ENCODE measurements at regions of chr19 and their contacts with region 1.

Region 1: DNA sequence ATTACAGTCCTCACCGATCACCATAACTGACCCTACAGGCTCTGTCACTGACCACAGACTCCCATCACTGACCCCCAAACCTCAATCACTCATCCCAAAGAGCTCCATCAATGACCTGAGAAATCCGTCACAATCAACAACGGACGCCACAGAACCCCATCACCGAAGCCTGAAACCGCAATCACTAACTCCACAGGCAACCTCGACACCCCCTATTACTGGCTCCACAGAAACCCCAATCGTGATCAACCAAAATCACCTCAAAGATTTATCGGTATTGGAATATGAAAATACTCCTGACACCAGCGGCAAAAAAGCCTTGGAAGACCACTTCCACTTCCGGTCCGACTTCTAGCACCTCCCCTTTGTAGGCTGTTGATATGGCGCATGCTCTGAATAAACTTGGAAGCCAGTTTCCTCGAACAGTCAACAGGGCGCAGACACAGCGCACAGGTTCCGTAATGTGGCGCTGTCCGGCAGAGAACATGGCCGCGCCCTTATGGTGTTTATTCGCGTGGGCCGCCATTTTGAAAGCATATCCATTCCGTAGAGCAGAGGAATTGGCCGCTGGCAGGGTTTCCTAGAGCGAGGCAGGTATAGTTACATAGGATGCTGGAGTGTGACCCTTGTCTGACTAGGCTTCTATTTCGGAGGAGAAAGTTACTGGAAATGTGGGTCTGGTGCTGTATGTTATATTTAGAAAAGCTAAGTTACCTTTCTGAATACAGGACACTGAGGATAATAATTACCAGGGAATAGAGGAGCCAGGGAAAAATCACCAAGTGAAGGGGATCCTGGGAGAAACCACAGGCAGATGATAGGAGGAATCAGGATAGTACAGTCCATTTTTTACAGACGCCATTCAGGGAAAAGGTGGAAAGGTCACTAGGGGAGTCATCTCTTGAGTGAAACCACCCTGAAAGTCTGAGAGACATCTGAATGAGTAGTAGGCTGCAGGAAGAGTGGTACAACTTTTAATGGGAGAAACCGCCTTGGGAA is at the start of gene ZNF585A:
- DNase-seq: peak; percentile 92
- ATAC-seq: peak; percentile 100
- H3K4me3 Mint-ChIP-seq: no peak within 1 kb of the TSS
- H3K27ac Mint-ChIP-seq: no peak within 1 kb of the TSS
- H3K4me1 Mint-ChIP-seq: no peaks in the 10 kb centered on the region
- H3K27me3 Mint-ChIP-seq: no peaks in the 10 kb centered on the region
- total RNA-seq, gene ZNF585A: 8.7 to 9.8 TPM

Region 2: GRCh38 chr19:36745870-36746269 is 426.8 kb before region 1 on chr19:
- CTCF ChIA-PET with region 1: no interaction called
- POLR2A ChIA-PET with region 1: no interaction called
- intact Hi-C with region 1: no loop called
- DNase-seq: no peak
- ATAC-seq: no peak
- H3K4me3 Mint-ChIP-seq: no peak overlapping the region
- H3K27ac Mint-ChIP-seq: no peak overlapping the region
- H3K4me1 Mint-ChIP-seq: no peaks in the 10 kb centered on the region
- H3K27me3 Mint-ChIP-seq: no peaks in the 10 kb centered on the region

Region 3: GRCh38 chr19:37127999-37128820 is 44.5 kb before region 1 on chr19:
- CTCF ChIA-PET with region 1: no interaction called
- POLR2A ChIA-PET with region 1: no interaction called
- intact Hi-C with region 1: no loop called
- DNase-seq: no peak
- ATAC-seq: no peak
- H3K4me3 Mint-ChIP-seq: no peak overlapping the region
- H3K27ac Mint-ChIP-seq: no peak overlapping the region
- H3K4me1 Mint-ChIP-seq: no peaks in the 10 kb centered on the region
- H3K27me3 Mint-ChIP-seq: no peaks in the 10 kb centered on the region

Region 4: GRCh38 chr19:37197768-37198167 is 25.1 kb after region 1 on chr19:
- CTCF ChIA-PET with region 1: no interaction called
- POLR2A ChIA-PET with region 1: no interaction called
- intact Hi-C with region 1: no loop called
- DNase-seq: no peak
- ATAC-seq: no peak
- H3K4me3 Mint-ChIP-seq: no peak overlapping the region
- H3K27ac Mint-ChIP-seq: no peak overlapping the region
- H3K4me1 Mint-ChIP-seq: no peaks in the 10 kb centered on the region
- H3K27me3 Mint-ChIP-seq: no peaks in the 10 kb centered on the region

Region 5: DNA sequence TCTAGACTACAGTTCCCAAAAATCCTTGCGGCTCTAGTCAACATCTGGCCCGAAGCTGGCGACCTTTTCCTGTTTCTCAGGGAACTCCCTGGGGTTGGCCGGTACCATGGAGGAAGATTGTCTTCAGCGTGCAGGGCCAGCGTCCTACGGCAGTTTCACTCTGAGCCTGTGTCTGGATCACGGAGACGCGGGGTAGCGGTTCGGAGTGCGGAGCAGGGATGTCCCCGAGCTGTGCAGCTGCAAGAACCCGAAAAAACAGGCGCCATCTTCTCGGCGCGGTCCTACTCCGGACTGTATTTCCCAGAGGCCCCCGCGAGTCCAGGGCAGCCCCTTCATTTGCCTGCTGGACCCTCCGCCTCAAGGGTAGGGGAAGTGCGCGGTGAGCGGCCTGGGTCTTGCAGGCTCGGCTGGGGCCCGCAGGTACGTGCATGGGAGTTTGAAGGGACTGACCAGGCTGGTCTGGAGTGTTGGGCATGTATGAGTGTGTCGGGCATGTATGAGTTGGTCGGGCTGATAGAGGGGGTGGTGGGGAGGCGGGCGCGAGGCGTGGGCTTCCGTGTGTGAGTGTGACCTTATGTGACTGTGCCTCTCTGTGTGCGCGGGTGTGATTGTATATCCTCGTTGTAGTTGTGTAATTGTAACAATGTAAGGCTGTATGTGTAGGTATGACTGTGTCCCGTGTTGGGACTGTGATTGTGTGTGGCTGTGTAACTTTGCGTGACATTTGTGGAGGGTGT is 45.4 kb after region 1 on chr19 and contains the start of gene ZNF383:
- CTCF ChIA-PET with region 1: interaction called, 7 read pairs
- POLR2A ChIA-PET with region 1: no interaction called
- intact Hi-C with region 1: loop called (anchors 1 to 2 kb)
- DNase-seq: peak; percentile 89
- ATAC-seq: peak; percentile 87
- H3K4me3 Mint-ChIP-seq: peak within 1 kb of the TSS; percentile 93
- H3K27ac Mint-ChIP-seq: peak within 1 kb of the TSS; percentile 99
- H3K4me1 Mint-ChIP-seq: peaks cover 24% of the 10 kb centered on the region
- H3K27me3 Mint-ChIP-seq: no peaks in the 10 kb centered on the region
- total RNA-seq, gene ZNF383: 8.5 to 9.2 TPM